Activated CD4-positive, alpha-beta T cell treated with anti-CD3 and anti-CD28 coated beads for 36 hours (primary cell): ENCODE measurements at regions of chr7 and their contacts with region 1.

Region 1: DNA sequence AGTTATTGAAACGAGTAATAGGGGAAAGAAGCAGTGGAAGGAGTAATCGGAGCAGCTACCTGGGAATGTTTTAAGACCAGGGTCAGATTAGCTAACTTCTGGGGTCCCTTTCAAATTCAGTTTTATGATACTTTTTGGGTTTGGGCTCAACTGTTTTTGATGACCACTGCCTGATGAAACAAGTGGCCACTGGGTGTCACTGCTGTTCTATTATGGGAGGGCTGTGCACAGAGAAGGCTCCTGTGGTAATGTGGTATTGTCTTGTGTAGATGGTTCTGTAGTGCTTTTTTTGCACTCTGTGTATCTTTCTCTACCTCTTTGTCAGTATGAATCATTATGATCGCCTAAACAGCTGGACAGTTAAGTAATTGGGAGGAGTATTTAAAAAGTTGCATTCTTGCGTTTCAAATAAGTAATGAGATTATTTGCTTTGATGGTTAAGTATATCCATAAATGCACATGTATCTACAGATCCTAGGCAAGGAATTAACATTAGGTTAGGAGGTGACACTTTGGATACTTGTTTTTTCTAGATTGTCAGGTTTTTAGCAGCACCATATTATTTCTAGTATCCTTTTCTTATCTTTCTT is 128.4 kb downstream of the ABCA13 start:
- DNase-seq: peak; percentile 79
- ATAC-seq: peak; percentile 62
- H3K4me3 Mint-ChIP-seq: no peak overlapping the region
- H3K27ac Mint-ChIP-seq: no peak overlapping the region
- H3K4me1 Mint-ChIP-seq: peaks cover 16% of the 10 kb centered on the region
- H3K27me3 Mint-ChIP-seq: peaks cover 6% of the 10 kb centered on the region

Region 2: DNA sequence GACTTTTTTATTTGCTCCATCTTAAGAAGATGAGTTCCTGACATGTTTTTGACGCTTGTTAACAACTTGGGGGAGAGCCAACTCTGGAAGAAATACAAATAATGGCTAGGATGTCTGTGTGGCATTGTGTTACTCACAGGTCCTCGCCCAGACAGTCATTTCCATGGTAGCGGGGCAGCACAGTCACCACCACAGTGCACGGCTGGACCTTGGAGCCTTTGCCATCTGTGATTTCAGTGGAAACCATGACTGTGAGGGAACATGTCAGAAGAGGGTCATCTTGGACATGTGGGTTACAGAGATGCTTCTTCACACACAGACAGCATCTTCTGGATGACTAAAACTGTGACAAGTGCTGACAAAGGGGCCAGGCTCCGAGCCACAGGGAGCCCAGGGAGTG is 425.9 kb before region 1 on chr7:
- CTCF ChIA-PET with region 1: no interaction called
- POLR2A ChIA-PET with region 1: no interaction called
- intact Hi-C with region 1: loop called in 1 of 2 experiments (anchors 5 kb)
- DNase-seq: peak; percentile 16
- ATAC-seq: peak; percentile 60
- H3K4me3 Mint-ChIP-seq: no peak overlapping the region
- H3K27ac Mint-ChIP-seq: no peak overlapping the region
- H3K4me1 Mint-ChIP-seq: peaks cover 12% of the 10 kb centered on the region
- H3K27me3 Mint-ChIP-seq: peaks cover 2% of the 10 kb centered on the region

Region 3: DNA sequence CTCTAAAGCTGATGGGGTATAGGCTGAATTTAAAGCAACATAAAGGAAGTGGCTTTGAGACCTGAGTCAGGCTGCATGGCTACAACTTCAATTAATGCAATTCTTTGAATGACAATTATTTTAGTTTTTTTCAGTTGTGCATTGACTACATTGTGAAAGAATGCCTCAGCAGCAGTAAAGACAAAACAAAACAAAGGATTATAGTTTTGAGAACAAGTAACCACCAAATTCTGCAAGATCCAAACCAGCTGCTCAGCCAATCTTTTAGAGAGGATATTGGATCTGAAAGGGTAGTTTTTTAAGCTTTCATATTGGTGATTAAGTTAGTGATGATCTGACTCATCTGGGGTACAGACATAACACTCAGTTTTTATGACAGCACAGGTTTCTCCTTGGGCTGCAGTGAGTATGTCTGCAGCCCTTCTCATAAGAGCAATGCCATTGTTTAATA is 169.0 kb before region 1 on chr7:
- CTCF ChIA-PET with region 1: no interaction called
- POLR2A ChIA-PET with region 1: no interaction called
- intact Hi-C with region 1: loop called in 1 of 2 experiments (anchors 1 kb)
- DNase-seq: no peak
- ATAC-seq: peak; percentile 93
- H3K4me3 Mint-ChIP-seq: no peak overlapping the region
- H3K27ac Mint-ChIP-seq: no peak overlapping the region
- H3K4me1 Mint-ChIP-seq: peaks cover 6% of the 10 kb centered on the region
- H3K27me3 Mint-ChIP-seq: peaks cover 14% of the 10 kb centered on the region

Region 4: GRCh38 chr7:48875045-48875916 is 575.6 kb after region 1 on chr7:
- CTCF ChIA-PET with region 1: no interaction called
- POLR2A ChIA-PET with region 1: no interaction called
- intact Hi-C with region 1: loop called in 1 of 2 experiments (anchors 2 kb)
- DNase-seq: peak; percentile 34
- ATAC-seq: no peak
- H3K4me3 Mint-ChIP-seq: no peak overlapping the region
- H3K27ac Mint-ChIP-seq: no peak overlapping the region
- H3K4me1 Mint-ChIP-seq: no peaks in the 10 kb centered on the region
- H3K27me3 Mint-ChIP-seq: no peaks in the 10 kb centered on the region

Region 5: DNA sequence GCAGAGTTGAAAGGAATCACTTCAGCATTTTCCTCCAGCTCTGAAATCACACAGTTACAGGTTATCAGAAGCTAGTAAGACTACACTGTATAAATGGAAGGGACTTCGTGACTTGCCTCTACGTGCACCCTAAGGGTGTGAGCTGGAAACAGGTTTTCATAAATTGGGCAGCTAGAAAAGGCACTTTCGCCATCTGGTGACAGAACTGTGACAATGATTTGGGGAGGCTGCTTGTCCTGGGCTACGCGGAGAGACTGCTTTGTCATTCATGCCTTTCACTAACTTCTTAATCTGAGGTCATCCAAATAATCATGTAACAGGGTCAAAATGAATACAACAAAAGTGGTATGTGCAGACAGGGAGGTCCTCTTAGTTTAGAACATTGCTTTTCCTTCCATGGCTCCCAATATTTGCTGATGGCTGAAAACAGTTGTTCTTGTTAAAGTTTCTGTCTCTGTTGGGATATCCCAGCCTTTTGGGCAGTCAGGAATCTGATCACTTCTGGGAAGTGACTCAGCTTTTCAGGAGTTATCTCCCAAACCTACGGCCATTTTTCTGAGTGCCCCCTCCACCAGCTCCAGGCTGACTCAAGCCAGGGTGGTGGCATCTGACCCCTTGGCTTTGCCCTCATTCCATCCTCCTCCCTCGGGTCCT is 1491.5 kb after region 1 on chr7:
- CTCF ChIA-PET with region 1: no interaction called
- POLR2A ChIA-PET with region 1: no interaction called
- intact Hi-C with region 1: loop called (anchors 1 to 5 kb)
- DNase-seq: peak; percentile 32
- ATAC-seq: peak; percentile 47
- H3K4me3 Mint-ChIP-seq: no peak overlapping the region
- H3K27ac Mint-ChIP-seq: no peak overlapping the region
- H3K4me1 Mint-ChIP-seq: no peaks in the 10 kb centered on the region
- H3K27me3 Mint-ChIP-seq: peaks cover 9% of the 10 kb centered on the region